A549 (cell line): ENCODE measurements at regions of chr1 and their contacts with region 1.

Region 1: DNA sequence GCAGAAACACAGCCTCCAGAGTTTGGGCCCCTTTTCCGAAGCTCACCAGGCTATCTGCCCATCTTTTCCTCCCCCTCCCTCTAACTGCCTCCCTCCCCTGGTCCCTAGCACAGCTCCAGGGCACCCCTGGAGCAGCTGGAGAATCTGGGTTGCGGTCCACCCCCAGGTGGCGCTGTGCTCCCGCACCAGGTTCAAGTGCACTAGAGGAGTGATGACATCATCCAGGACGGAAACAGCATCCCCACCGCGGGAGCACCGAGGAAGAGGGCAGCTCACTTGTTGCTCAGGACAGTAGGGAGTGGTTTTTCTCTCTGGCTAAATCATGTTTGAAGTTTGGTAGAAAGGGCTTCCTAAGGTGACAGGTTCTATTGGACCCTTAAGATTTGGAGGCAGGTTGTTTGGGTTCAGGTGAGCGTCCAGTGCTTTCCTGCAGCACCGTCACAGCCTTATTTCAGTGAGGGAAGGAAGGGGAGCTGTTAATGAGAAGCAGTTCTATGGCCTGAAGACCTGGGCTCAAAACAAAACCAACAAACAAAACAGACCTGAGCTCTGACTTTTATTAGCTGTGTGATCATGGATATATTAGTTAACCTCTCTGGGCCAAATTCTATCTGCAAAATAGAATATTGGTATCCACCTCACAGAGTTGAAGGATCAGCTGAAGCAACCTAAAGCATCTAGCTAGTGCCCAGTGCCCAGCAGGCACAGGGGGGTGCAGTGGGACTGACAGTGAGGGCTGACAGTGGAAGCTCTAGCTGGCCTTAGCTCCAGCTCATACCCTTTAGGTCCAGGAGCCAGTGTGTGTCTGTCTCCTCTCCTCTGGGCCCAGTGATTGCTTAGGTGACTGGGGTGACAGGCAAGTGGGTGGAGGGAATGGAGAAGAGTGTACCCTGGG is 7.5 kb downstream of the SHISA4 start:
- DNase-seq: peak; percentile 88 to 94
- ATAC-seq: peak; percentile 91 to 96
- H3K4me3 ChIP-seq: no peak overlapping the region
- H3K27ac ChIP-seq: peak overlapping the region; percentile 60 to 73; a peak in 5 of 6 replicates
- H3K4me1 ChIP-seq: peaks cover 3% of the 10 kb centered on the region; the same call in 1 of the 3 replicates
- CTCF ChIP-seq: peak; percentile 98
- EP300 ChIP-seq: no peak
- POLR2A ChIP-seq: no peak
- RAD21 ChIP-seq: peak; percentile 99

Region 2: DNA sequence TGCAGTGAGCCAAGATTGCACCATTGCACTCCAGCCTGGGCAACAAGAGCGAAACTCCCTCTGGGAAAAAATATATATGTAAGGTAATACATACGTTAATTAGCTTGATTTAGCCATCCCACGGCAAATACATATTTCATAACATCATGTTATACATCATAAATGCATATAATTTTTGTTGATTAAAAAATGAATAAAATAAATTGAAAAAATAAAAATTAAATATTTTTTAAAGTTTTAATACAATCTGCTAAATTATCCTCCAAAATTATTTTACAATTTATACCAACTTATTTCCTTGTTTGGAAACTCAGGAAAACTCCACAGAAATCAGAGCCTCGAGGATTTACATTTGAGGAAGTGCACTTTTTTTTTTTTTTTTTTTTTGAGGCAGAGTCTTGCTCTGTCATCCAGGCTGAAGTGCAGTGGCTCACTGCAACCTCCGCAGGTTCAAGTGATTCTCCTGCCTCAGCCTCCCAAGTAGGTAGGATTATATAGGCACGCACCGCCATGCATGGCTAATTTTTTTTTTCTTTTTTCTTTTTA is 79.8 kb before region 1 on chr1:
- CTCF ChIA-PET with region 1: no interaction called
- POLR2A ChIA-PET with region 1: no interaction called
- DNase-seq: no peak
- ATAC-seq: no peak
- H3K4me3 ChIP-seq: no peak overlapping the region
- H3K27ac ChIP-seq: no peak overlapping the region
- H3K4me1 ChIP-seq: no peaks in the 10 kb centered on the region
- CTCF ChIP-seq: no peak
- EP300 ChIP-seq: no peak
- POLR2A ChIP-seq: no peak
- RAD21 ChIP-seq: no peak

Region 3: GRCh38 chr1:201870397-201870796 is 25.8 kb before region 1 on chr1:
- CTCF ChIA-PET with region 1: interaction called, 245 read pairs
- POLR2A ChIA-PET with region 1: no interaction called
- DNase-seq: no peak
- ATAC-seq: no peak
- H3K4me3 ChIP-seq: no peak overlapping the region
- H3K27ac ChIP-seq: no peak overlapping the region
- H3K4me1 ChIP-seq: no peaks in the 10 kb centered on the region
- CTCF ChIP-seq: no peak
- EP300 ChIP-seq: no peak
- POLR2A ChIP-seq: no peak
- RAD21 ChIP-seq: no peak

Region 4: GRCh38 chr1:201928266-201928665 is 32.1 kb after region 1 on chr1:
- CTCF ChIA-PET with region 1: interaction called, 16 read pairs
- POLR2A ChIA-PET with region 1: no interaction called
- DNase-seq: no peak
- ATAC-seq: no peak
- H3K4me3 ChIP-seq: no peak overlapping the region
- H3K27ac ChIP-seq: no peak overlapping the region
- H3K4me1 ChIP-seq: no peaks in the 10 kb centered on the region
- CTCF ChIP-seq: no peak
- EP300 ChIP-seq: no peak
- POLR2A ChIP-seq: no peak
- RAD21 ChIP-seq: no peak

Region 5: DNA sequence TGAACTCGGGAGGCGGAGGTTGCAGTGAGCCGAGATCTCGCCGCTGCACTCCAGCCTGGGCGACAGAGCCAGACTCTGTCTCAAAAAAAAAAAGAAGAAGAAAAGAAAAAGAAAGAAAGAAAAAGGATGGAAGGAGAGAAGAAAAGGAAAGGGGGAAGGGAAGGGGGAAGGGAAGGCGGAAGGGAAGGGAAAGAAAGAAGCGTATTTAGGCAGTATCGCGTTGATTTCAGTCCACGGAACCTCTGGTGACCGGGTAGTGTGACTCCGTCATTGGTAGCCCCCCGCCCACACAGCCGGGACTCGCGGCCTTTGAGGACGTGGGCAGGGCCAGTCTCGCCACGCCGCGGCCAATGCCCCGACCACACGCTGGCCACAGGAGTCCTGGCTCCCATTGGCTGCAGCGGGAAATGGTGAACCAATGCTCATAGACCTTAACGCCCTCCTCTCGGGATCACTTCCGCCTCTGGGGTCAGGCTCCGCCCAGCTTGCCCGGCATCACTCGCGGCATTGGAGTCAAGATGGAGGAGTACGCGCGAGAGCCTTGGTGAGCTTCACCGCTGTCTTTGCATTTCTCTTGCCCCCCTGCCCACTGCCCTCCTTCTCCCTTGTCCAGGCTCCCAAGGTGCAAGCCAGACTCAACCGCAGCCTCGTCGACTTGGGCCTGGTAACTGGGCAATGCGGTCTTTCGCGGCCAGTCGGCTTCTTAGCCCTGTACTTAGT is 59.0 kb after region 1 on chr1 and contains the start of gene TIMM17A:
- CTCF ChIA-PET with region 1: interaction called, 124 read pairs
- POLR2A ChIA-PET with region 1: interaction called, 16 read pairs
- DNase-seq: peak; percentile 93 to 98
- ATAC-seq: peak; percentile 100
- H3K4me3 ChIP-seq: peak within 1 kb of the TSS; percentile 96
- H3K27ac ChIP-seq: peak within 1 kb of the TSS; percentile 91 to 93
- H3K4me1 ChIP-seq: peaks cover 12% of the 10 kb centered on the region; the same call in 2 of the 3 replicates
- CTCF ChIP-seq: no peak
- EP300 ChIP-seq: no peak
- POLR2A ChIP-seq: peak; percentile 83
- RAD21 ChIP-seq: no peak
- polyA plus RNA-seq, gene TIMM17A: 96.2 and 127 TPM in 2 replicates

Region 6: DNA sequence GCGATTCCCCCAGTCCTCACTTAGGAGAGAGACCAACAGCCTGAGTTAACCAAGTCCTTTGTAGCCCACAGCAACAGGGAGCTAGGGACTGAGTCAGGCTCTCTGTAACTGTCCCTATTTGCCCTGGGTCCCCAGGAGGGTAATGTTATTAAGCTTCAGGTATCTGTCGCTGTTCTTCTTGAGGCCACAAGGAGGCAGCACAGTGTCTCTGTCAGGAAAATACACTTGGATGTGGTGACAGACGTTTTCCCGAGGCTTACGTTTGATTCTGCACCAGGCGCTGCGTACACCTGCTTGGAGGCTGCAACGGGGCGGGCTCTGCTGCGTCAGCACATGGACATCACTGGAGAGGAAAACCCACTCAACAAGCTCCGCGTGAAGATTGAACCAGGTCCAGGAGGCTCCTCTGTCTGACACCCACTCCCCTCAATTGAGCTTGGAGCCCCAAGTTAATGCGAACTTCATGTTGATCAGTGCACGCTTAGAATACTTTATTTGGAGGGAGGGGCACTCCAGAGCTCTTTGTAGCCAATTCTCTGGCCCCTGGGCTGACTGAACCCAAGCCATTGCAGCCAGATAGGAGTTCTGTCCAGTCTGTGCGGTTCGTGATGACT is 103.6 kb after region 1 on chr1:
- CTCF ChIA-PET with region 1: interaction called, 39 read pairs
- POLR2A ChIA-PET with region 1: no interaction called
- DNase-seq: peak; percentile 83 to 89
- ATAC-seq: peak; percentile 70 to 86; a peak in 5 of 6 replicates
- H3K4me3 ChIP-seq: no peak overlapping the region
- H3K27ac ChIP-seq: no peak overlapping the region
- H3K4me1 ChIP-seq: no peaks in the 10 kb centered on the region
- CTCF ChIP-seq: peak; percentile 80
- EP300 ChIP-seq: no peak
- POLR2A ChIP-seq: no peak
- RAD21 ChIP-seq: peak; percentile 72 to 81

Region 7: GRCh38 chr1:202135221-202135721 is 239.1 kb after region 1 on chr1:
- CTCF ChIA-PET with region 1: interaction called, 32 read pairs
- POLR2A ChIA-PET with region 1: no interaction called
- DNase-seq: peak; percentile 73 to 93
- ATAC-seq: peak; percentile 87 to 92
- H3K4me3 ChIP-seq: no peak overlapping the region
- H3K27ac ChIP-seq: peak overlapping the region in 1 of 2 experiments; percentile 48; a peak in 2 of 6 replicates
- H3K4me1 ChIP-seq: 0 out of 3 replicates have a peak, but pooled peaks cover 2% of the 10 kb centered on the region
- CTCF ChIP-seq: peak; percentile 75
- EP300 ChIP-seq: no peak
- POLR2A ChIP-seq: no peak
- RAD21 ChIP-seq: peak; percentile 81 to 82